ENCODE measurements at regions of chr11 and their contacts with region 1.

Region 1: DNA sequence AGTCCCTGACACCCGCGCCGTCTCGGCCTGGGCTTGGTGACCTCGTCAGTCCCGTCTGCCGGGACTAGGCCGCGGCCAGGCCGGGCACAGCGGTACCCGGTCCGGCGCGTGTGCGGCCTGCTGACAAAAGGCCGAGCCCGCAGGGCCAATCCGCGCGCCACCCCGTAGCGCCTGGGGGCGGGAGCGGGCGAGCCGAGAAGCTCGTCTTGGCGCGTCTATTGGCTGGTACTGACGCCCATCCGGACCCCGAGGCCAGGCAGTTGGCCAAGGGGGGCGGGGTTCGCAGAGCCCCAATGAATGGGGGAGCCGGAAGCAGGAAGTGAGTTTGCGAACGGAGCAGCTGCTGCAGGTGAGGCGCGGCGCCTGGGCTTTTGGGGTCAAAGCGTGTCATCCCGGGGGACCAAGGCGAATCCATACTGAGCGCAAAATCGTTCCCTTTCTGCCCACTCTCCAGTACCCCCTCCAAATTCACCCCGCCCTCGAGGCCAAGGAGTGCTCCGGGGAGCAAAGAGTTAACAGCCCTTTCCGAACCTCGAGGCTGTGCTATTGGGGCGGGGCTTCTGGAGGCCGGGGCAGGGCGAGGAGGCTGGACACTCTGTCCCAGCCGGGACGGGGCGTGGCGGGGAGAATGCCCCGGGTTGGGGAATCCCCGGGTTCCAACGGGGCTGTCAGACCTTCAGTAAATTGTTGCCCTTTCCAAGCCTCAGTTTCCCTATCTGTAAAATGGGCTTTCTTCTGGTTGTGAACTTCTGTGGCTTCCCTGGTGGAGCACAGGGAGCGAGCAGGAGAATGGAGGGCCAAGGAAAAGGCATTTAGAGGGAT is at the start of gene DPP3:
- DNase-seq: peak; percentile 97 to 100
- ATAC-seq: peak; percentile 92 to 95
- H3K4me3 ChIP-seq: peak within 1 kb of the TSS; percentile 73
- H3K27ac ChIP-seq: peak within 1 kb of the TSS; percentile 94 to 98
- H3K4me1 ChIP-seq: peaks cover 6% of the 10 kb centered on the region; the same call in 1 of the 3 replicates
- CTCF ChIP-seq: no peak
- EP300 ChIP-seq: no peak
- POLR2A ChIP-seq: peak; percentile 80
- RAD21 ChIP-seq: no peak
- polyA plus RNA-seq, gene DPP3: 52.2 TPM in 2 replicates

Region 2: GRCh38 chr11:66421492-66422205 is 58.7 kb before region 1 on chr11:
- CTCF ChIA-PET with region 1: interaction called, 19 read pairs
- POLR2A ChIA-PET with region 1: interaction called, 13 read pairs
- DNase-seq: peak; percentile 83 to 84
- ATAC-seq: peak; percentile 52 to 76; a peak in 4 of 6 replicates
- H3K4me3 ChIP-seq: no peak overlapping the region
- H3K27ac ChIP-seq: no peak overlapping the region
- H3K4me1 ChIP-seq: peaks cover 12% of the 10 kb centered on the region
- CTCF ChIP-seq: no peak
- EP300 ChIP-seq: no peak
- POLR2A ChIP-seq: no peak
- RAD21 ChIP-seq: 0 out of 5 replicates have a peak, but pooled peaks of 1 of the 2 experiments have one; percentile 2

Region 3: DNA sequence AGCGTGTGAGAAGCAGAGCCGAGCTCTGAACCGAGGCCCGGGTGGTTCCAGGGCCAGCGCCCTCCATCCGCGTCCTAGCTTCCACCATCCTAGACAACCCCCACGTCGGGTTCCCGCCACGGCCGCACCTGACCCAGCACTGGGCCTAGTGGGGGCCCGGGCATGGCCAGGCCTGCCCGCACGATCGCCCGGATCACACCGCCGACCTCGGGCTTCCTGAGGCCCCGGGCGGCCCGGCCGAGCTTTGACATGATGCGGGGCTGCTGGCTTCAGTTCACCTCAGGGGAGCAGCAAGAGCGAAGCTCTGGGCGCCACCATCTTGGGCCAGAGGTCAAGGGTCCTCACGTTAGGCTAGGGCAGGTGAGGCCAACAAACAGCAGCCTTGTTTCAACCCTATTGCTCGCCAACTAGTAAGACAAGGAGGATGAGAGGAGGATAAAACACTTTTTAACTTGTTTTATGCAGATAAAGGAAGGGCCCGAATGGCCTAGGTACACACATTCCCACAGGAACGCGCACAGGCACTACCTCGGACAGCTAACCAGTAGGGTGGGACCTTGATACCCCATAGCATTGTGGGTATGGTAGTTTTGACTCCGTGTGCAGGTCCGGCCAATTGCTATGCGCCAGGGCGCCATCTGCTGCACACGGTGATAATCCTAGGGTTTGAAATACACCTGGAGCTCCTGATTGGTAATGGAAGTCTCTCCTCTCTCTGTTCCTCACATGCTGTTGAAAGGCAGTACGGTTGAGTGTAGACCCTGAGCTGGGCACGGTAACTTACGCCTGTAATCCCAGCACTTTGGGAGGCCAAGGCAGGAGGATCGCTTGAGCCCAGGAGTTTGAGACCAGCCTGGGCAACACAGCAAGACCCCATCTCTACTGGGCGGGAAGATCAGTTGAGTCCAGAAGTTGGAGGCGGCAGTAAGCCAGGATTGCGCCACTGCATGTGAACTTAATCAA is 41.5 kb before region 1 on chr11 and contains the start of gene MRPL11:
- CTCF ChIA-PET with region 1: interaction called, 18 read pairs
- POLR2A ChIA-PET with region 1: interaction called, 22 read pairs
- DNase-seq: peak; percentile 94 to 98
- ATAC-seq: peak; percentile 95 to 97
- H3K4me3 ChIP-seq: peak within 1 kb of the TSS; percentile 69
- H3K27ac ChIP-seq: peak within 1 kb of the TSS; percentile 79 to 92
- H3K4me1 ChIP-seq: peaks cover 15% of the 10 kb centered on the region
- CTCF ChIP-seq: peak; percentile 78
- EP300 ChIP-seq: no peak
- POLR2A ChIP-seq: peak; percentile 40; the same call in 1 of the 2 replicates
- RAD21 ChIP-seq: peak; percentile 41 to 54; a peak in 4 of 5 replicates
- polyA plus RNA-seq, gene MRPL11: 62.9 and 70.1 TPM in 2 replicates

Region 4: GRCh38 chr11:66491315-66491935 is 11.1 kb after region 1 on chr11:
- CTCF ChIA-PET with region 1: interaction called, 27 read pairs
- POLR2A ChIA-PET with region 1: interaction called, 12 read pairs
- DNase-seq: no peak
- ATAC-seq: peak; percentile 69 to 83; a peak in 4 of 6 replicates
- H3K4me3 ChIP-seq: no peak overlapping the region
- H3K27ac ChIP-seq: no peak overlapping the region
- H3K4me1 ChIP-seq: no peaks in the 10 kb centered on the region
- CTCF ChIP-seq: 0 out of 3 replicates have a peak, but pooled peaks have one; percentile 11
- EP300 ChIP-seq: no peak
- POLR2A ChIP-seq: no peak
- RAD21 ChIP-seq: no peak

Region 5: GRCh38 chr11:66545701-66546367 is 65.5 kb after region 1 on chr11 and contains the start of gene ZDHHC24:
- CTCF ChIA-PET with region 1: interaction called, 3 read pairs
- POLR2A ChIA-PET with region 1: interaction called, 11 read pairs
- DNase-seq: peak; percentile 97
- ATAC-seq: peak; percentile 89 to 98
- H3K4me3 ChIP-seq: peak within 1 kb of the TSS; percentile 85
- H3K27ac ChIP-seq: peak within 1 kb of the TSS; percentile 85 to 96
- H3K4me1 ChIP-seq: peaks cover 17% of the 10 kb centered on the region
- CTCF ChIP-seq: no peak
- EP300 ChIP-seq: no peak
- POLR2A ChIP-seq: peak; percentile 71
- RAD21 ChIP-seq: no peak
- polyA plus RNA-seq, gene ZDHHC24: 8.4 and 8.6 TPM in 2 replicates

Region 6: GRCh38 chr11:66638177-66639065 is 158.1 kb after region 1 on chr11 and contains the start of gene RBM4:
- CTCF ChIA-PET with region 1: no interaction called
- POLR2A ChIA-PET with region 1: interaction called, 17 read pairs
- DNase-seq: peak; percentile 99 to 100
- ATAC-seq: peak; percentile 95
- H3K4me3 ChIP-seq: peak within 1 kb of the TSS; percentile 71
- H3K27ac ChIP-seq: peak within 1 kb of the TSS; percentile 88 to 91
- H3K4me1 ChIP-seq: peaks cover 44% of the 10 kb centered on the region
- CTCF ChIP-seq: 0 out of 3 replicates have a peak, but pooled peaks have one; percentile 6
- EP300 ChIP-seq: no peak
- POLR2A ChIP-seq: peak; percentile 73
- RAD21 ChIP-seq: no peak
- polyA plus RNA-seq, gene RBM4: 190 and 264 TPM in 2 replicates

Measured in A549 (cell line).